Endothelial cell of umbilical vein (primary cell): ENCODE measurements at regions of chr4 and their contacts with region 1.

Region 1: GRCh38 chr4:15805583-15806517 is 27.7 kb downstream of the CD38 start:
- DNase-seq: peak; percentile 58
- H3K4me3 ChIP-seq: no peak overlapping the region
- H3K27ac ChIP-seq: no peak overlapping the region
- H3K4me1 ChIP-seq: peaks cover 4% of the 10 kb centered on the region
- H3K27me3 ChIP-seq: peaks cover 15 to 28% of the 10 kb centered on the region in 2 experiments
- CTCF ChIP-seq: peak; percentile 63 to 65
- POLR2A ChIP-seq: no peak

Region 2: DNA sequence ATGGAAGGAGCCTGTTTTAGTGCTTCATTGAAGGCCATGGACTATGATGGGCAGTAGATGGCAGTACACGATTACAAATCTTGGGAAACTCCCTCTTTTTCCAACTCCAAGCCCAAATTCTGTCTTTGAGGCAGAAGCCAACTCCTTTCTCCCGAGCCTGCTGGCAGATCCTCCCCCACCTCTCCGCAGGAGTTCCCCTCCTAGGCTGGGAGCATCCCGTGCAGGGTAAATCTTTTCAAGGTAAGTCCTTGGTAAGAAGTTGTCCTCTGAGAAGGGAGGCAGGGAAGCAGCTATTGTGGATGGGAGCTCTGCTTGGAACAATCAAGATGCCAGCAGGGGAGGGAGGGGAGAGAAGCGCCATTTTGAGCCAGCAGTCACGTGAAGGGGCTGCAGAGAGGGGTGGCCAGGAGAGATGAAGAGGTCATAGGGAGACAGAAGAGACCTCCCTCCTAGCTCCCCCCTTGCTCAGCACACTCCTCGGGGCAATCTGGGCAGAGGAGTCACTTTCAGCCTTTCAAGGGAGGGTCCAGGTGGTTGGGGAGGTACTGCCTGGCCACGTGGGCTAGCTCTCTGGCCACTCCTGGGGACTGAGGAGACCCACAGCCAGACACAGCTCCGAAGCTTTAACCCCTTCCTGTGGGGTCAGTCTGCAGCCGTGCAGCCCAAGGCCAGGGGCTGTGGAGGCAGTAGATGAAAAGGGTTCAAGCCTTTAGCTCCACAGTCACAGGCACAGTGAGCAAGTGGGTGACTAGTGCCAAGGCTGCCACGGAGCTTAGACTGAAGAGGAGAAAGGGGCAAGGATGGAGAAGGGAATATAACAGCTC is 326.5 kb before region 1 on chr4:
- CTCF ChIA-PET with region 1: interaction called, 50 read pairs
- POLR2A ChIA-PET with region 1: no interaction called
- dilution Hi-C with region 1: no loop called
- intact Hi-C with region 1: loop called (anchors 1 kb)
- DNase-seq: peak; percentile 89
- H3K4me3 ChIP-seq: peak overlapping the region; percentile 24 to 81 (median 44)
- H3K27ac ChIP-seq: peak overlapping the region; percentile 66
- H3K4me1 ChIP-seq: peaks cover 10% of the 10 kb centered on the region
- H3K27me3 ChIP-seq: no peaks in the 10 kb centered on the region
- CTCF ChIP-seq: peak; percentile 71 to 73
- POLR2A ChIP-seq: no peak

Region 3: GRCh38 chr4:15781427-15782095 is 24.3 kb before region 1 on chr4:
- CTCF ChIA-PET with region 1: interaction called, 14 read pairs
- POLR2A ChIA-PET with region 1: no interaction called
- dilution Hi-C with region 1: no loop called
- intact Hi-C with region 1: no loop called
- DNase-seq: no peak
- H3K4me3 ChIP-seq: no peak overlapping the region
- H3K27ac ChIP-seq: no peak overlapping the region
- H3K4me1 ChIP-seq: peaks cover 15% of the 10 kb centered on the region
- H3K27me3 ChIP-seq: peaks cover 16 to 34% of the 10 kb centered on the region in 2 experiments
- CTCF ChIP-seq: no peak
- POLR2A ChIP-seq: no peak

Region 4: DNA sequence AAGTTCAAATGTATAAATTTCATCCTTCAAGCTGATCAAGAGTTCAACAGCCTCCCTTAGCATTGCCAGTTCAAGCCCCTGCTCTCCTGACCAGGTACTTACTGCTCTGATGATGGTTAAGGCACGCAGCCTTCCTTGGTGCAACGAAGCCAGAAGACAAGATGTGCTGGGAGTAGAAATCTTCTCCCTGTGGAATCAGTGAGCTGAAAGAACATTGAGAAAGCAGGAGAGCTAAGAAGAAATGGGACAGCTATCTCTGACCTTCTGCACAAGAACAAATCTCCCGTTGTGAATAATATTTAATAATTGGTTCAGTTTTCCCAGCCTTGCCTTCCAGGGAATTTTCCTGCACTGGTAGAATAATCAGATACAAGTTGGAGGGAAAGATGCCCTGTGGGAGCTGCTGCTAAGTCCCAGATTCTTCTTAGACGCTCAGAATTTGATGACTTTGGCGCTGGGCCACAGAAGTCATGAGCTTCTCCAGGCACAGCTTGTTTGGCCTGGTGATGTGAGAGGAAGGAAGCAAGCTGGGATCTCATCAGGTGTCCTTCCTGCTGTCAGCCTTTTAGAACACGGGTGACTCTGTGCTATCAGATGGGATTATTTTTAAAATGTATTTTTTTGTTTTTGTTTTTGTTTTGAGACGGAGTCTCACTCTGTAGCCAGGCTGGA is 50.1 kb after region 1 on chr4:
- CTCF ChIA-PET with region 1: interaction called, 13 read pairs
- POLR2A ChIA-PET with region 1: no interaction called
- dilution Hi-C with region 1: no loop called
- intact Hi-C with region 1: no loop called
- DNase-seq: no peak
- H3K4me3 ChIP-seq: no peak overlapping the region
- H3K27ac ChIP-seq: no peak overlapping the region
- H3K4me1 ChIP-seq: no peaks in the 10 kb centered on the region
- H3K27me3 ChIP-seq: peaks cover 0 to 1% of the 10 kb centered on the region in 2 experiments
- CTCF ChIP-seq: no peak
- POLR2A ChIP-seq: no peak

Region 5: DNA sequence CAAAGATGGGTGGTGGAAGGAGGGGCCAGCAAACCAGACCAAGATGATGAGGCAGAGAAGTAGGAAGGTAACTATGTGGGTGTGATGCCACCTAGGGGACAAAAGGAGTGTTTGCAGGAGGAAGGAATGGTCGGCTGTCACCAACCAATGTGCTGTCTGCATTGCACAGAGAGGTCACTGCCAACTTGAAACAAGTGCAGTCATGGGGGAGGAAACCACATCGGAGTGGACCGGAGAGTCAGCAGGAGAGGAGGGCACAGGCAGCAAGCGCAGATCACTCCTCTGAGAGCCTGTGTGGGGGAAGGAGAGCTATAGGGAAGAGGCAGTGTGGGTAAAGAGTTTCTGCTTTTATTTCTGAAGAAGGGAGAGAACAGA is 195.6 kb after region 1 on chr4:
- CTCF ChIA-PET with region 1: interaction called, 93 read pairs
- POLR2A ChIA-PET with region 1: no interaction called
- dilution Hi-C with region 1: no loop called
- intact Hi-C with region 1: loop called (anchors 1 kb)
- DNase-seq: peak; percentile 73
- H3K4me3 ChIP-seq: no peak overlapping the region
- H3K27ac ChIP-seq: no peak overlapping the region
- H3K4me1 ChIP-seq: no peaks in the 10 kb centered on the region
- H3K27me3 ChIP-seq: peaks cover 6% of the 10 kb centered on the region in 2 experiments
- CTCF ChIP-seq: peak; percentile 78 to 85
- POLR2A ChIP-seq: no peak

Region 6: DNA sequence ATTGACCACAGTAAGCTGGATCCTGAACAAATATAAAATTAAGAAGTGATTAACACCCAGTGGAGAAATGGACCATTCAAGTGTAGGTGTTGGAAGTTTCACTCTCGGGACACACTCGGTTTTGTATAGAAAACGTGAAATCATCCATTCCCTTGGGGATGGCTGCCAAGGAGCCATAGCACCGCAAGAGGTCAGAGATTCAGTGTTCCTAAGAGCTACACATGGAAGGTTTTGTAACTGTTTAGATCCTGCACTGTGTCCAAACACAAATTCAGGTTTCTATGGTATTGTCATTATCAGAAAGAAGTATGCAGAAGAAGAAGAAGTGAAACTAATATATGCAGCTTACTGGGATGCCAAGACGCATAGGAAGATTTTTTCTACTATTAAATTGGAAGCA is 811.6 kb after region 1 on chr4:
- CTCF ChIA-PET with region 1: no interaction called
- POLR2A ChIA-PET with region 1: no interaction called
- dilution Hi-C with region 1: no loop called
- intact Hi-C with region 1: no loop called
- DNase-seq: no peak
- H3K4me3 ChIP-seq: no peak overlapping the region
- H3K27ac ChIP-seq: no peak overlapping the region
- H3K4me1 ChIP-seq: no peaks in the 10 kb centered on the region
- H3K27me3 ChIP-seq: no peaks in the 10 kb centered on the region
- CTCF ChIP-seq: no peak
- POLR2A ChIP-seq: no peak